Activated naive CD4-positive, alpha-beta T cell treated with anti-CD3 and anti-CD28 coated beads for 36 hours (primary cell): ENCODE measurements at regions of chr1 and their contacts with region 1.

Region 1: DNA sequence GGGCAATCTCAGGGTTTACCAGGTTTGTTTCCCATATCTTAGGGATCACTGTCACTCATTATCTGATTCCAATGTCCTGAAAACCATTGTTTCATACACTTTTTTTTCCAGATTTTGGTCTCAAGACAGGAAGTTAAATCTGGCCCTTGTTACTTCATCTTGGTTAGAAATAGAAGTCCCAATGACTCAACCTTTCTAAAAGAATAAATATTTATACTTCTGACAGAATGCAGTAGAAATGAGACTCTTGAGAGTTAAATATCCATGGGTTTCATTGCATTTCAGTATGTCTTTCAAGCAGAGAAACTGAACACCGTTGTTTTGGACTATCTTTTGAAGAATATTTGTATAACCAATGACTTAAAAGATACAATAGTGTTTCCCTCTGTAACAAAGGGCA is 19.8 kb upstream of the VCAM1 start:
- DNase-seq: no peak
- H3K4me3 Mint-ChIP-seq: no peak overlapping the region
- H3K27ac Mint-ChIP-seq: no peak overlapping the region
- H3K4me1 Mint-ChIP-seq: no peaks in the 10 kb centered on the region
- H3K27me3 Mint-ChIP-seq: peaks cover 14% of the 10 kb centered on the region

Region 2: DNA sequence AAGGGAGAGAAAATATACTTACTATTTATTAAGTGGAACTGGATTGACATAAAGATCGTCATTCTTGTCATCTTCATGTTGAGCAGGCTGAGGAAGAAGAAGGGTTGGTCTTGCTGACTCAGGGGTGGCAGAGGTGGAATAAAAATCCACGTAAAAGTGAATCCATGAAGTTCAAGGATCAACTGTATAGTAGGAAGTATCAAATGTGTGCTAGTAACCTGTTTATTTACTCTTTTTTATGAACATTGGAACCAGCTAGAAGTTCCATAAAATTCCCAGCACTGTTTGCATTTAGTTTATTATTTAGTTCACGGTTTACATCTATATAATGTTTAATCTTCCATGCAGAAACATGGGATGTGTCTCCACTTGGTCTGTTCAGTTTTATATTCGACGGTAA is 1364.8 kb before region 1 on chr1:
- CTCF ChIA-PET with region 1: no interaction called
- intact Hi-C with region 1: loop called (anchors 5 kb)
- DNase-seq: no peak
- H3K4me3 Mint-ChIP-seq: no peak overlapping the region
- H3K27ac Mint-ChIP-seq: no peak overlapping the region
- H3K4me1 Mint-ChIP-seq: no peaks in the 10 kb centered on the region
- H3K27me3 Mint-ChIP-seq: no peaks in the 10 kb centered on the region